Endothelial cell of umbilical vein (primary cell): ENCODE measurements at regions of chr17 and their contacts with region 1.

Region 1: DNA sequence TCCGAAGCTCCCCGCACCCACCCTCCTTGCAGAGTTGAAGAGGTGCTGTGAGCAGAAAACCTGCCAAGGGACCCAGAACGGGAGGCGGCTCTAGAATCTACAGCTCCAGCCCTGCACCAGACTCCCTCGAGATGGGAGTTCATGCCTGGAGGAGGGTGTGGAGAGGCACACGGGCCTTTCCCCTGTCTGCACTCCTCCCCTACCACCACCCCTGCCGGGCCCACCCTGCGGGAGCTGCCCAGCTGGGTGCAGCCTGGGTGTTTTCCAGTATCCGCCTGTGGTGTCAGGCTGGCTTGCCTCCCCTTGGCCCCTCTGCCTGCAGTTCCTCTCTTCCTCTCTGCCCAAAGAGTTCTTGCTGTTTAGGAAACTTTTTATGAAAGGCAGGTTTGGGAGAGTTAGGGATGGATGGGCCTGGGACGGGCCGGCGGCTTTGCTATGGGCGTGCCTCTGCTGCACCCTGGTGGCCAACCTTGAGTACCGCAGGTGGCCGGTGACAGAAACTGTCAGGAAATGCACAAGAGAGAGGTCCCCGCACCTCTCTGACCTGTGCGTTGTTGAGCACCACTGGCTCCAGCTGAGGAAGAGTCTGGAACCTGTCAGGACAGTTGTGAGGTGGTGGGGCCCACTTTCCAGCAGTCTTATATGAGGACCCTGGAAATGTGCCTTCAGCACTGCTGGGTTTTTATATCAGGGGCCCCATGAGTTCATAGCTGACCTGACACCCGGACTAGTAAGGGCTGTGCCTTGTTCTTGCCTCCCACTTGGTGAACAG is 354.1 kb downstream of the SEC14L1 start:
- DNase-seq: peak; percentile 60
- H3K4me3 ChIP-seq: no peak overlapping the region
- H3K27ac ChIP-seq: no peak overlapping the region
- H3K4me1 ChIP-seq: peaks cover 3% of the 10 kb centered on the region
- H3K27me3 ChIP-seq: no peaks in the 10 kb centered on the region
- CTCF ChIP-seq: peak; percentile 83 to 94
- POLR2A ChIP-seq: no peak

Region 2: DNA sequence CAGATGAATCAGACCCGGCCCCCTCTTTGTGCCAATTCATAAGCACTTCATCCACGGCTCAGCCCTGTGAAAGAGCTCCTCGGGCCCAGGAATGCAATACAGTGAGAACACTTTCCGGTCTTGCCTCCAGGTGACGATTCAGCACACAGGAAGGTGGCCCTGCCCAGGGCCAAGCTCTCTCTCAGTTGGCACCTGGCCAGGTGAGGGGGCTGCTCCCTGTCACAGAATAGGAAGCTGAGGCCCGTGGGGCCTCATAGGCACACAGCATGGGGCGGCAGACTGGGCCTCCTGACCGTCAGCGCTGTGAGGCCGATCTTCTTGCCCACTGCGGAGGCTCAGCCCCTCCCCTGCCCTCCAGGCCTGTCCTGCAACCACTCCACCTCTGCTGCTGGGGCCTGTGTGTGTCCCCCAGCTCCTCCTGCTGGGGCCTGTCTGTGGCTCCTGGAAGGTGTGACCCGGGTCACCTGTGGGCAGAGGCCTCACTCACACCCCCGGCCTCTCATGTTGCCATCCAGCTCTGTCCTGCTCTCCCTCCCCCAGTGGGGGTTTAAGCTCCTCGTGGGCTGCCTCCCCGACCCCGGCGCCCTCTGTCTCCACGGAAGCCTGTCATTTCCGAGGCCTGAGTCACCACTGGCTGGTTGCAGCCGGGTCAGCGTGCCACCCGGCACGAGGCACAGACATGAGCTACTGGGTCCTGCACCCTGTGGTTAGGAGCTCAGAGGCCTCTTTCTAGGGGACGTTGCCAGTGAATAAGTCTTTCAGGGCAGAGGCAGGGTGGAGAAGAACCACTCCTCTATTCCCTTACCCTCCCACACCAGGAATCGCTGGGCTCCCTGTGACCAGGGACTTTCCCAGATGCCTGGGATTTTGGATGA is 239.7 kb before region 1 on chr17:
- CTCF ChIA-PET with region 1: interaction called, 4 read pairs
- POLR2A ChIA-PET with region 1: no interaction called
- dilution Hi-C with region 1: no loop called
- intact Hi-C with region 1: loop called (anchors 5 kb)
- DNase-seq: peak; percentile 22
- H3K4me3 ChIP-seq: no peak overlapping the region
- H3K27ac ChIP-seq: peak overlapping the region; percentile 52
- H3K4me1 ChIP-seq: peaks cover 22% of the 10 kb centered on the region
- H3K27me3 ChIP-seq: no peaks in the 10 kb centered on the region
- CTCF ChIP-seq: no peak
- POLR2A ChIP-seq: no peak

Region 3: DNA sequence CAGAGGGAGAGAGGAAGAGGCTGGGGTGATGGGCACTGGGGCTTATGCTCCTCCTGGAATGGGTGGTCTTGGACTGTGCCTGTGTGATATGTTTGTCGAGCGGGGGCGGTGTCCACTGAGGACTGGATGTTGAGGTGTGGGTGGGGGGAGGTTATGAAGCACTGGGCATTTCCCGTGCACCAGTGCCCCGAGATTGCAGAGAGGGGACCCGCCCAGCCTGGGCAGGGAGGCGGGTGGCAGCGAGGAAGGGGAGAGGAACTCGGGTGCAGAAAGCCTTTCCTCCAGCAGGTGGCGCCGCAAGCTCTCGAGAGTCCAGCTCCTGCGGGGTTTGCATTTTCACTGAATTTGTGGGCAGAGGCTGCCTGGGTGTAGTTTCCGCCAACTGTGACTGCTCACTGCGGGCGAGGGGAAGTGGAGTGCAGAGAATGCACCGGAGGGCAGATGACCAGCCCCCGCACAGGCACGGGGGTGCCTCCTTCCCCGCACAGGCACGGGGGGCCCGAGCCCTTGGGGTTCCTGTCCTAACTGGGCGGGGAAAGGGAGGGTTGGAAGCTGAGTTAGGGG is 163.5 kb before region 1 on chr17:
- CTCF ChIA-PET with region 1: interaction called, 55 read pairs
- POLR2A ChIA-PET with region 1: no interaction called
- dilution Hi-C with region 1: no loop called
- intact Hi-C with region 1: loop called (anchors 1 kb)
- DNase-seq: peak; percentile 78
- H3K4me3 ChIP-seq: peak overlapping the region in 1 of 3 experiments; percentile 14
- H3K27ac ChIP-seq: no peak overlapping the region
- H3K4me1 ChIP-seq: peaks cover 5% of the 10 kb centered on the region
- H3K27me3 ChIP-seq: no peaks in the 10 kb centered on the region
- CTCF ChIP-seq: peak; percentile 85 to 95
- POLR2A ChIP-seq: no peak

Region 4: GRCh38 chr17:77391668-77392375 is 103.0 kb before region 1 on chr17:
- CTCF ChIA-PET with region 1: no interaction called
- POLR2A ChIA-PET with region 1: no interaction called
- dilution Hi-C with region 1: no loop called
- intact Hi-C with region 1: no loop called
- DNase-seq: peak; percentile 57
- H3K4me3 ChIP-seq: no peak overlapping the region
- H3K27ac ChIP-seq: no peak overlapping the region
- H3K4me1 ChIP-seq: peaks cover 47% of the 10 kb centered on the region
- H3K27me3 ChIP-seq: no peaks in the 10 kb centered on the region
- CTCF ChIP-seq: no peak
- POLR2A ChIP-seq: peak; percentile 42

Region 5: GRCh38 chr17:77420804-77421629 is 73.8 kb before region 1 on chr17:
- CTCF ChIA-PET with region 1: interaction called, 10 read pairs
- POLR2A ChIA-PET with region 1: no interaction called
- dilution Hi-C with region 1: no loop called
- intact Hi-C with region 1: no loop called
- DNase-seq: peak; percentile 42
- H3K4me3 ChIP-seq: no peak overlapping the region
- H3K27ac ChIP-seq: no peak overlapping the region
- H3K4me1 ChIP-seq: peaks cover 35% of the 10 kb centered on the region
- H3K27me3 ChIP-seq: no peaks in the 10 kb centered on the region
- CTCF ChIP-seq: no peak
- POLR2A ChIP-seq: no peak

Region 6: GRCh38 chr17:77451245-77451893 is 43.5 kb before region 1 on chr17:
- CTCF ChIA-PET with region 1: interaction called, 5 read pairs
- POLR2A ChIA-PET with region 1: no interaction called
- dilution Hi-C with region 1: no loop called
- intact Hi-C with region 1: loop called (anchors 1 kb)
- DNase-seq: peak; percentile 71
- H3K4me3 ChIP-seq: peak overlapping the region; percentile 70 to 81 (median 78)
- H3K27ac ChIP-seq: peak overlapping the region; percentile 48
- H3K4me1 ChIP-seq: peaks cover 28% of the 10 kb centered on the region
- H3K27me3 ChIP-seq: no peaks in the 10 kb centered on the region
- CTCF ChIP-seq: no peak
- POLR2A ChIP-seq: peak; percentile 35

Region 7: DNA sequence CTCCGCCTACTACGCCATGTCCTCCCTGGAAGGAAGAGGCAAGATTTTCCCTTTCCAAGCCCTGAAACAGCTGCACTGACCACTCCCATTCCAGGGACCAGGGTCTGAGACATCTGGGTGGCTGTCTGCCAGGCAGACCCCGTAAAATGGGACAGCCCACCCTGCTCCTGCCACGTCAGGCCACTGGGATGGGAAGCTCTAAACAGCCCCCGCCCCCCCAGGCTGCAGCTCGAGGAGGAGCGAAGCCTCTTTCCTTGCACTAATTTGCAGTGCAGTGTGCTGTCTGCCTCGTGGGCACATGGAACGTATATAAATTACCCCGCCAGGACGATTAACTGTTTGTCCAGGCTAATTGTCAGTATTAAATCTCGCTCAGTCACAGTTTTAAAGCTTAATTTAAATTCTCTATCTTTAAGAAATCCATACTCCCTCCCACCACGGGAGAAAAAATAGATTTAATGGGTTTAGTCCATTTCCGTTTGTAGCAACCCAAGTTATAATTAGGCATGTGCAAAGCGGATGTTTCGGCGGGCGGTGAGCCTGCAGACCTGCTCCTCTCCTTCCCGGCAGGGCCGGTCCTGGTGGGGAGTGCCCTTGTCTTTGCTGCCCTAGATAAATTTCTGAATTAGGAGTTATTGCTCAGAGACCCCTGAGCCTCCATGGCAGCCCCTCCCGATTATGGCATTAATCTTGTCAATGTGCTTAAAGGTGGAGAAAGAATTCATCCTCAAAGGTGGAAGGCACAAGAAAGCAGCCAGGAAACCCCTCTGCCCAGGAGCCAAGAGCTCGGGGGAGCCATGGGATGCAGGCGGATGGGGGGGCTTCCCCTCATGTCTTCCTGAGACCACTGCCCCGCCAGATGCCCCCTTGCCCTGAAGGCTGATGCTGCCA is 195.7 kb after region 1 on chr17:
- CTCF ChIA-PET with region 1: no interaction called
- POLR2A ChIA-PET with region 1: no interaction called
- dilution Hi-C with region 1: no loop called
- intact Hi-C with region 1: no loop called
- DNase-seq: no peak
- H3K4me3 ChIP-seq: no peak overlapping the region
- H3K27ac ChIP-seq: no peak overlapping the region
- H3K4me1 ChIP-seq: no peaks in the 10 kb centered on the region
- H3K27me3 ChIP-seq: peaks cover 8 to 9% of the 10 kb centered on the region in 2 experiments
- CTCF ChIP-seq: no peak
- POLR2A ChIP-seq: no peak